MCF 10A (cell line): ENCODE measurements at regions of chr1 and their contacts with region 1.

Region 1: GRCh38 chr1:228664399-228664914 is 70.8 kb upstream of the RHOU start:
- DNase-seq: peak; percentile 96
- H3K4me3 Mint-ChIP-seq: no peak overlapping the region
- H3K27ac Mint-ChIP-seq: no peak overlapping the region
- H3K4me1 Mint-ChIP-seq: no peaks in the 10 kb centered on the region
- H3K27me3 Mint-ChIP-seq: no peaks in the 10 kb centered on the region
- CTCF ChIP-seq: peak; percentile 99

Region 2: GRCh38 chr1:228684607-228685006 is 20.1 kb after region 1 on chr1:
- CTCF ChIA-PET with region 1: interaction called, 19 read pairs
- POLR2A ChIA-PET with region 1: interaction called, 3 read pairs
- intact Hi-C with region 1: no loop called
- DNase-seq: no peak
- H3K4me3 Mint-ChIP-seq: no peak overlapping the region
- H3K27ac Mint-ChIP-seq: no peak overlapping the region
- H3K4me1 Mint-ChIP-seq: no peaks in the 10 kb centered on the region
- H3K27me3 Mint-ChIP-seq: peaks cover 10% of the 10 kb centered on the region
- CTCF ChIP-seq: no peak

Region 3: DNA sequence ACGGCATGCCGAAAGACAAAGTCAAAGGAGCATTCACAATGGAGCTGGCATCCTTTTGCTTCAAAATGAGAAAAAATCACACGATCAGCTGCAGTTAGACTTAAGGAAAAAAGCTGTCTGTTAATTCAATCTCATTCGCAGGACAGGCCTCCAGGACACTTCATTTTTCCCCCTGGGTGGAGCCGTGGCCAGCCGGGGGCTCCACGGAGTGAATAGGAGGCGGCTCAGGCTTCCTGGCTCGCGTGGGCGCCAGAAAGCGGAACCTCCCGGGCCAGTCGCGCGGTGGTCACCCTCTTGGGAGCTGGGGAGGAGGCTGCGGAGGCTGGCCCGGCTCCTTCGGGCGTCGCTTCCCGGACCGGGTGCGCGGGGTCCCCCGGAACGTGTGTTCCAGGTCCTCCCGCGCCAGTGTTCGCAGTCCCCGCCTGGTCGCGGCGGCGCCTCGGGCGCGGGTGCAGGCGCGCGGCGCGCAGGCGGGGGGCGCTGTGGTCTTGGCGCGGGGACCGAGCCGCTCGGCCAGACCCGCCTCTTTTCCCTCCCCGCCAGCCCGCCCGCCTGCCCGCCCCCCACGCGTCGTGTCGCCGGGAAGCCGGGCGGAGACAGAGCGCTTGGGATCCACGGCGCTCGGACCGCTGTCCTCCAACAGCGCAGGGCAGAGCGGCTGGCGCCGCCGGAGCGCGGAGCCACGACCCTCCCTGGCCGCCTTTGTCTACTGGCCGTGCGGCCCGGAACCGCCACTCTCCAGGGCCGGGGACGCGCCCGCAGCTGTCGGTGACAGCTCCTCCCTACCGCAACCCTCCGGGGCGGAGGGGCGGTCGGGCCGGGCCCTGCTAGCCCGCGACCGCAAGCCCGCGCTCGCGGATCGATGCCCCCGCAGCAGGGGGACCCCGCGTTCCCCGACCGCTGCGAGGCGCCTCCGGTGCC is 70.7 kb after region 1 on chr1 and contains the start of gene RHOU:
- CTCF ChIA-PET with region 1: interaction called, 10 read pairs
- POLR2A ChIA-PET with region 1: no interaction called
- intact Hi-C with region 1: loop called (anchors 2 kb)
- DNase-seq: peak; percentile 55
- H3K4me3 Mint-ChIP-seq: peak within 1 kb of the TSS; percentile 72
- H3K27ac Mint-ChIP-seq: peak within 1 kb of the TSS; percentile 61
- H3K4me1 Mint-ChIP-seq: peaks cover 12% of the 10 kb centered on the region
- H3K27me3 Mint-ChIP-seq: peaks cover 9% of the 10 kb centered on the region
- CTCF ChIP-seq: peak; percentile 98
- total RNA-seq, gene RHOU: 2.1 and 3.6 TPM in 2 replicates

Region 4: DNA sequence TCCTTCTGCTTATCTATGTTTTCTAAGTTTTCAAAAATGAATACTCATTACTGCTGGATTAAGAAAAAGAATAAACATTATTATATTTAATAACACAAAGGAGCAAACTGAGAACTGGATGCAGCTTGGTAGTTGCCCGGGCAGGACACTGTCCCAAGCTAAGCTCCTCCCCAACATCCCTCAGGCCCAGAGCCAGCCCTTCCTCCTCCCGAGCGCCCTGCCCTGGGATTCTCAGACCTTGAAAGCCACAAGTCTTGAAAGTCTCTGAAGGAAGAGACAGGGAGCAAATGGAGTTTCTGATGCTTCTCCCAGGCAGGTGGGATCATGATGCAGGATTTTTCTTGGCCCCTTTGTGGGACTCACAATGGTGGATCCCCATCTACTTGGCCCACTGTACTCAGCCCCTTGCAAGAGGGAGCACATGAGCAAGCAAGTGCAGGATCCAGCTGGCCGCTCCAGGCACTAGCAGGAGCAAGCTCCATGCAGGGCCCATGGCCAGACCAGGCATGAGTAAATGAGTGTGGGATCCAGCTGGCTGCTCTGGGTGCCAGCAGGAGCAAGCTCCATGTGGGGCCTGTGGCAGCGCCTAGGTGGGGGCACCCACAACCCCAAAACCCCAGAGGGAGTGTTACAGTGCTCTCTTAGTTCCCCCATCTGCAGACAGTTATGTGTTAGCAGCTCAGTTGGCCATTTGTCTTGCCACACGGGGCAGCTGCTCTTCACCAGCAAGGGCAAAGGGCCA is 574.4 kb after region 1 on chr1:
- CTCF ChIA-PET with region 1: interaction called, 10 read pairs
- POLR2A ChIA-PET with region 1: interaction called, 3 read pairs
- intact Hi-C with region 1: no loop called
- DNase-seq: peak; percentile 78
- H3K4me3 Mint-ChIP-seq: no peak overlapping the region
- H3K27ac Mint-ChIP-seq: peak overlapping the region; percentile 92
- H3K4me1 Mint-ChIP-seq: peaks cover 20% of the 10 kb centered on the region
- H3K27me3 Mint-ChIP-seq: no peaks in the 10 kb centered on the region
- CTCF ChIP-seq: no peak

Region 5: DNA sequence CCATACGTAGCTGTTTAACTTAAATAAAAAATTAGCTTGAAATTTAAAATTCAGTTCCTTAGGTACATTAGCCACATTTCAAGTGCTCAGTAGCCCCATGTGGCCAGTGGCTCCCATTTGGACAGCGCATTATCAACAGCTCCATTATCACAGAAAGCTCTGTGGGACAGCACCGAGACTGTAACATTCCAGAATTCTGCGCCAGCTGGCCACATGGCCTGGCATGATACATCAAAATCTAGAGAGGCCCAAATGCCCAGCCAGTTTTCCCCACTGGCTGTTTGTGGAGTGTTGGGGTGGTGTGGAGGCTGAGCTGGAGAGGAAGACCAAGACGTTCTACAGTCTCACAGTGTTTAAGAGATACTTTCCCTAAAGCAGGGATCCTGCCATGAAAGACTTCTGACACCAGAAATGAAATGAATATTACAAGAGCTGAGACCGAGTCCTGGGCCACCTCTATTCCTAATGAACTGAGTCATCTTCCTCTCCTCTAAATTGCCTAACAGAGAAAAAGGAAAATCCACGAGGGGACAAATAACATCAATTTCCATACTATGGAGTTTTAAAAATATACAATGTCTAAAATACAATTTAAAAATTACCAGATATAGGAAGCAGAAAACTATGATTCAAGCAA is 796.7 kb after region 1 on chr1:
- CTCF ChIA-PET with region 1: interaction called, 10 read pairs
- POLR2A ChIA-PET with region 1: interaction called, 3 read pairs
- intact Hi-C with region 1: no loop called
- DNase-seq: no peak
- H3K4me3 Mint-ChIP-seq: no peak overlapping the region
- H3K27ac Mint-ChIP-seq: no peak overlapping the region
- H3K4me1 Mint-ChIP-seq: peaks cover 4% of the 10 kb centered on the region
- H3K27me3 Mint-ChIP-seq: no peaks in the 10 kb centered on the region
- CTCF ChIP-seq: no peak

Region 6: DNA sequence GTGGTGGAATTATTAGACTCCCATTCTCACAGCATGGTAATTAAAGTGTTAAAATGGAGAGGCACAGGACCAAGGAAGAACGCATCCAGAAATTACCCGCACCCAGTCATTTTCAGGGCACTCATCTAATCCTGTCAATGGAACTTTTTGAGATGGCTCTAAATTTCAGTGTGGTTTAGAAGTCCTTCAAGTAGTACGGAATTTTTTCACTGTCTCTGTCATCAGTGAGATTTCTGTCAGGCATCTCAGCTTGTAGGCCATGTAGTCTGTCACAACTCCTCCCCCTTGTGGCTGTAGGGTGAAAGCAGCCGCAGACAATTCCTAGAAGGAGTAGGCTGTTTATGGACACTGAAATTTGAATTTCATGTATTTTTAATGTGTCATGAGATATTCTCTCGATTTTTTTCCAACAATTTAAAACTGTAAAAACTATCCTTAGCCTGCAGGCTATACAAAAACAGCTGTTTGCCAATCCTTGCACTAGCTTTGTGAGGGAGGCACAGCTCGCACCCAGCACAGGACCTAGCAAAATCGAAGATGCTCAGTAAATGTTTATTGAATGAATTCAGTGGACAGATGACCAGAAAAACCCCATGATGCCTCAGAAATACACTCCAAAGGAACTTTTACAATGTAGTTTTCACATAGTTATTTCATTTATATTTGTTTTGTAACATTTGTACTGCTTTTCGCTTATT is 850.3 kb after region 1 on chr1:
- CTCF ChIA-PET with region 1: interaction called, 8 read pairs
- POLR2A ChIA-PET with region 1: no interaction called
- intact Hi-C with region 1: loop called (anchors 1 kb)
- DNase-seq: peak; percentile 90
- H3K4me3 Mint-ChIP-seq: no peak overlapping the region
- H3K27ac Mint-ChIP-seq: no peak overlapping the region
- H3K4me1 Mint-ChIP-seq: peaks cover 6% of the 10 kb centered on the region
- H3K27me3 Mint-ChIP-seq: no peaks in the 10 kb centered on the region
- CTCF ChIP-seq: peak; percentile 91